Activated B cell treated with CpG ODN at 0.5 μM for 24 hours (primary cell): ENCODE measurements at regions of chr10 and their contacts with region 1.

Region 1: GRCh38 chr10:23314835-23315239 is 29.8 kb downstream of the C10orf67 start:
- DNase-seq: no peak
- ATAC-seq: peak; percentile 25
- H3K4me3 Mint-ChIP-seq: no peak overlapping the region
- H3K27ac Mint-ChIP-seq: no peak overlapping the region
- H3K4me1 Mint-ChIP-seq: peaks cover 4% of the 10 kb centered on the region
- H3K27me3 Mint-ChIP-seq: peaks cover 3% of the 10 kb centered on the region
- CTCF ChIP-seq: peak; percentile 77

Region 2: DNA sequence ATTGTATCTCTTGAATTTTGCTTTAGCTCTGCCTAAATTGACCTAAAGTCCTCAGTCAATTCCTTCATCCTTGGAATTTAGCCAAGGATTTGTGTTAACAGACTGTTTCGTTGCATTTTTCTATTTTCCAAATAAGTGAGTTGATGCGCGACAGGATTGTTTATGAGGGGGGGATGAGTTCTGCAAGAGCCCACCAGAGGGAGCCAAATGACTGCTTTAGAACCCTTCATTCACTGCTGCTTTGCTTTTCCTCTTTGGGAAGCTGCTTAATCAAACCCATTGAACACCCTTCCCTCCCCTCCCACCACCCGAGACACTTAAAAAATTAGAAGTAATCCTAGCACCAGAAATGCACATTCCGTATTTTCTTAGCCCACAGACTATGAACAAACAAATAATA is 156.5 kb before region 1 on chr10:
- CTCF ChIA-PET with region 1: interaction called, 3 read pairs
- POLR2A ChIA-PET with region 1: no interaction called
- intact Hi-C with region 1: loop called (anchors 1 kb)
- DNase-seq: no peak
- ATAC-seq: peak; percentile 66
- H3K4me3 Mint-ChIP-seq: no peak overlapping the region
- H3K27ac Mint-ChIP-seq: no peak overlapping the region
- H3K4me1 Mint-ChIP-seq: peaks cover 3% of the 10 kb centered on the region
- H3K27me3 Mint-ChIP-seq: peaks cover 21% of the 10 kb centered on the region
- CTCF ChIP-seq: peak; percentile 92

Region 3: DNA sequence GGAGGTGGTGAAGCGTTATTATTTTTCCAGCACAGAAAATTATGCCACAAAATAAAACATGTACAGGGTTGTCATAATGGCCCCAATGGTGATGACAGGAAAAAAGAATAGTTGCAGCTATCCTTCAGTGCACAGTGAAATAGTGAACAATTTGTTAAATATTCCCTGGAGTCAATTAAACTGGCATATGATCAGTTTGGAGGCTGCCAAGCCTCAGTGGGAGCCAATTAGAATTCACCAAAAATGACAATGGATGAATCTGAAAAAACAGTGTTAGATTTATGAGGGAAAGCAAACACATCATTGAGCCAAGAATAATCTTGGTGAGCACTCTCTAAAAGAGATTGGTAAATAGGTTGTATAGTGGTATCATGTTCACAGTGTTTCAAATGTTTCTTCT is 270.3 kb after region 1 on chr10:
- CTCF ChIA-PET with region 1: no interaction called
- POLR2A ChIA-PET with region 1: no interaction called
- intact Hi-C with region 1: no loop called
- DNase-seq: no peak
- ATAC-seq: no peak
- H3K4me3 Mint-ChIP-seq: no peak overlapping the region
- H3K27ac Mint-ChIP-seq: no peak overlapping the region
- H3K4me1 Mint-ChIP-seq: no peaks in the 10 kb centered on the region
- H3K27me3 Mint-ChIP-seq: no peaks in the 10 kb centered on the region
- CTCF ChIP-seq: no peak

Region 4: DNA sequence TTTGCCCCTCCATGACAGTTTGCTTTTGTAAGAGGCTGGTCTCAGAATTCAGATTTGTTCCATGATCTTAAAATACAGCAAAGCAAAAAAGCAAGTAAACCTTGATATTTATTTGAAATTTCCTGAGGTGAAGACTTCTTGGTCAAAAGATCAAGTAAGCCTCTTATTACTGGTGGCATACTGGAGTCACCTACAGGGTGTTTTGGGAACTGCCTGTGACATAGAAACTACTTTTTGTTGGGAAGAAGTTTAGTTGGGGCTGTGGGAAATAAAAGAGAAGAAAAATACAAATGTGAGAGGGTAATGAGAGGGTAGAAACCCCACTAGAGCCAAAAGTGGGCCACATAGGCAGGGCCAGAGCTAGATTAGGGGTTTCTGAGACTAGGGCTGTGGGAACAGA is 341.9 kb after region 1 on chr10:
- CTCF ChIA-PET with region 1: no interaction called
- POLR2A ChIA-PET with region 1: no interaction called
- intact Hi-C with region 1: loop called (anchors 1 kb)
- DNase-seq: no peak
- ATAC-seq: no peak
- H3K4me3 Mint-ChIP-seq: no peak overlapping the region
- H3K27ac Mint-ChIP-seq: no peak overlapping the region
- H3K4me1 Mint-ChIP-seq: no peaks in the 10 kb centered on the region
- H3K27me3 Mint-ChIP-seq: no peaks in the 10 kb centered on the region
- CTCF ChIP-seq: no peak

Region 5: GRCh38 chr10:23702977-23703414 is 388.2 kb after region 1 on chr10:
- CTCF ChIA-PET with region 1: interaction called, 10 read pairs
- POLR2A ChIA-PET with region 1: no interaction called
- intact Hi-C with region 1: loop called (anchors 1 kb)
- DNase-seq: no peak
- ATAC-seq: peak; percentile 52
- H3K4me3 Mint-ChIP-seq: no peak overlapping the region
- H3K27ac Mint-ChIP-seq: no peak overlapping the region
- H3K4me1 Mint-ChIP-seq: peaks cover 2% of the 10 kb centered on the region
- H3K27me3 Mint-ChIP-seq: peaks cover 13% of the 10 kb centered on the region
- CTCF ChIP-seq: peak; percentile 28